PC-9 (cell line): ENCODE measurements at regions of chr2 and their contacts with region 1.

Region 1: GRCh38 chr2:232951891-232952290 is 61.2 kb downstream of the NGEF start:
- DNase-seq: peak; percentile 50 to 68
- H3K4me3 ChIP-seq: no peak overlapping the region
- H3K27ac ChIP-seq: no peak overlapping the region
- H3K4me1 ChIP-seq: peaks cover 10% of the 10 kb centered on the region
- H3K27me3 ChIP-seq: no peaks in the 10 kb centered on the region
- CTCF ChIP-seq: no peak

Region 2: DNA sequence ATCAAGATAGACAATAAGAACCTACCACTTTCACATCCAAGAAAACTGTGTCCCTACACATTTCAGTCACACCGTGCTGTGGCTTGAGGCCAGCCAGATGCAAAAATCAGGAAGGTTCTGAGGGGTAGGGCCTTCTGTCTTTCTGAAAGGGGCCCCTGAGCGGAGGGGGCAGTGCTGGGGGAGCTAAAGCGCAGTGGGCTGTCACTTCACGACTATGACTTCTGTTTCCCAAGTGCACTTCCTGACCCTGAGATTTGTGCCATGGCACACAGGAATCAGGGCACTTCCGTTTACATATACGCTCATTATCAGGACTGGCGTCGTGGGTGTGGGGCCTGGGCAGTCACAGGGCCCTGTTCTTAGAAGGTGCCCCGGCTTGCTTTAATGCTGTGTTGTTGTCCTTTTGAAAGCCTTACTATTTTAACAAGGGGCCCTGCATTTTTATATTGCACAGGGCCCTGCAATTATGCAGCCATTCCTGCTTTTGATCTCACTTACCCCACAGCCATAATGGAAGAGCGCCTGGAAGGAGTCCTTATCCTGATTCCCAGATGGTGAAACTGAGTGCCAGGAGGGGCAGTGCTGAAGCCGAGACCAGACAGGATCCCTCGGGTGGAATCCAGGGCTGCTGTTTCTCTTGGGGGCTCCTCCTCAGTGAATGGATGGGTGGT is 60.5 kb after region 1 on chr2:
- CTCF ChIA-PET with region 1: interaction called, 17 read pairs
- POLR2A ChIA-PET with region 1: interaction called, 12 read pairs
- intact Hi-C with region 1: no loop called
- DNase-seq: no peak
- H3K4me3 ChIP-seq: no peak overlapping the region
- H3K27ac ChIP-seq: no peak overlapping the region
- H3K4me1 ChIP-seq: no peaks in the 10 kb centered on the region
- H3K27me3 ChIP-seq: no peaks in the 10 kb centered on the region
- CTCF ChIP-seq: no peak

Region 3: GRCh38 chr2:233546774-233547173 is 594.9 kb after region 1 on chr2:
- CTCF ChIA-PET with region 1: no interaction called
- POLR2A ChIA-PET with region 1: no interaction called
- intact Hi-C with region 1: no loop called
- DNase-seq: no peak
- H3K4me3 ChIP-seq: no peak overlapping the region
- H3K27ac ChIP-seq: no peak overlapping the region
- H3K4me1 ChIP-seq: 0 out of 2 replicates have a peak, but pooled peaks cover 3% of the 10 kb centered on the region
- H3K27me3 ChIP-seq: no peaks in the 10 kb centered on the region
- CTCF ChIP-seq: no peak